Caco-2 (cell line): ENCODE measurements at regions of chr1 and their contacts with region 1.

Region 1: GRCh38 chr1:189708674-189709073 is 769.0 kb downstream of the BRINP3 start:
- DNase-seq: peak in 1 of 2 experiments; percentile 49
- H3K4me3 ChIP-seq: no peak overlapping the region
- H3K4me3 Mint-ChIP-seq: no peak overlapping the region
- H3K27ac Mint-ChIP-seq: no peak overlapping the region
- H3K4me1 ChIP-seq: no peaks in the 10 kb centered on the region
- H3K4me1 Mint-ChIP-seq: no peaks in the 10 kb centered on the region
- H3K27me3 ChIP-seq: no peaks in the 10 kb centered on the region
- H3K27me3 Mint-ChIP-seq: peaks cover 2% of the 10 kb centered on the region
- CTCF ChIP-seq: peak in 1 of 2 experiments; percentile 39

Region 2: GRCh38 chr1:189628857-189629256 is 79.8 kb before region 1 on chr1:
- CTCF ChIA-PET with region 1: no interaction called
- POLR2A ChIA-PET with region 1: no interaction called
- intact Hi-C with region 1: no loop called
- DNase-seq: no peak
- H3K4me3 ChIP-seq: no peak overlapping the region
- H3K4me3 Mint-ChIP-seq: no peak overlapping the region
- H3K27ac Mint-ChIP-seq: peak overlapping the region; percentile 15
- H3K4me1 ChIP-seq: no peaks in the 10 kb centered on the region
- H3K4me1 Mint-ChIP-seq: peaks cover 14% of the 10 kb centered on the region
- H3K27me3 ChIP-seq: no peaks in the 10 kb centered on the region
- H3K27me3 Mint-ChIP-seq: no peaks in the 10 kb centered on the region
- CTCF ChIP-seq: no peak

Region 3: GRCh38 chr1:189962181-189962580 is 253.5 kb after region 1 on chr1:
- CTCF ChIA-PET with region 1: no interaction called
- POLR2A ChIA-PET with region 1: no interaction called
- intact Hi-C with region 1: loop called (anchors 5 kb)
- DNase-seq: no peak
- H3K4me3 ChIP-seq: no peak overlapping the region
- H3K4me3 Mint-ChIP-seq: no peak overlapping the region
- H3K27ac Mint-ChIP-seq: no peak overlapping the region
- H3K4me1 ChIP-seq: no peaks in the 10 kb centered on the region
- H3K4me1 Mint-ChIP-seq: no peaks in the 10 kb centered on the region
- H3K27me3 ChIP-seq: no peaks in the 10 kb centered on the region
- H3K27me3 Mint-ChIP-seq: no peaks in the 10 kb centered on the region
- CTCF ChIP-seq: no peak

Region 4: GRCh38 chr1:190320952-190321351 is 612.3 kb after region 1 on chr1:
- CTCF ChIA-PET with region 1: interaction called, 7 read pairs
- POLR2A ChIA-PET with region 1: no interaction called
- intact Hi-C with region 1: loop called (anchors 1 kb)
- DNase-seq: peak in 1 of 2 experiments; percentile 4
- H3K4me3 ChIP-seq: no peak overlapping the region
- H3K4me3 Mint-ChIP-seq: no peak overlapping the region
- H3K27ac Mint-ChIP-seq: no peak overlapping the region
- H3K4me1 ChIP-seq: no peaks in the 10 kb centered on the region
- H3K4me1 Mint-ChIP-seq: no peaks in the 10 kb centered on the region
- H3K27me3 ChIP-seq: no peaks in the 10 kb centered on the region
- H3K27me3 Mint-ChIP-seq: no peaks in the 10 kb centered on the region
- CTCF ChIP-seq: peak in 1 of 2 experiments; percentile 45

Region 5: GRCh38 chr1:190373705-190374336 is 665.1 kb after region 1 on chr1:
- CTCF ChIA-PET with region 1: no interaction called
- POLR2A ChIA-PET with region 1: no interaction called
- intact Hi-C with region 1: loop called (anchors 2 kb)
- DNase-seq: peak in 1 of 2 experiments; percentile 6
- H3K4me3 ChIP-seq: no peak overlapping the region
- H3K4me3 Mint-ChIP-seq: no peak overlapping the region
- H3K27ac Mint-ChIP-seq: no peak overlapping the region
- H3K4me1 ChIP-seq: no peaks in the 10 kb centered on the region
- H3K4me1 Mint-ChIP-seq: no peaks in the 10 kb centered on the region
- H3K27me3 ChIP-seq: no peaks in the 10 kb centered on the region
- H3K27me3 Mint-ChIP-seq: no peaks in the 10 kb centered on the region
- CTCF ChIP-seq: peak in 1 of 2 experiments; percentile 65